K562 (cell line): ENCODE measurements at regions of chr6 and their contacts with region 1.

Region 1: DNA sequence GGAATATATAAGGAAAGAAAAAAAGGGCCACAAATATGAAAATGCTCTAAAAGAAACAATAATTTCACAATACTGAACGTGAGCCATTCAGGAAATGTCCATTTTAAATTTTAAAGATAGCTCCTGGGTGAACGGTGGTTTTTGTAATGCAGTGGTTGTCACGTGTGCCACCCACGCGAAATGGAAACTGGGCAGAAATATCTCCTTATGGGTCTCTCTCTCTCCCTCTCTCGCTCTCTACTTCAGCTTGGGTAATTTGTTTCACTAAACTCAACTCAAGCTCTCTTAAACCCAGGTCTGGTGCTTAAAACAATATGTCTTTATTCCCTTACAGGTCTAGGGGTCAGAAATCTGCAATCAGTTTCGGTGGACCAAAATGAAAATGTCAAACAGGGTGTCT is 150.8 kb downstream of the OR2B2 start:
- DNase-seq: peak in 2 of 4 experiments; percentile 3 to 5
- ATAC-seq: no peak
- H3K4me3 ChIP-seq: no peak overlapping the region
- H3K27ac ChIP-seq: no peak overlapping the region
- H3K4me1 ChIP-seq: peaks cover 14 to 20% of the 10 kb centered on the region in 2 experiments; a peak in 4 of 5 replicates
- H3K27me3 ChIP-seq: no peaks in the 10 kb centered on the region
- CTCF ChIP-seq: no peak
- EP300 ChIP-seq: no peak
- POLR2A ChIP-seq: no peak
- RAD21 ChIP-seq: no peak

Region 2: GRCh38 chr6:27687154-27688013 is 74.0 kb before region 1 on chr6:
- CTCF ChIA-PET with region 1: no interaction called
- POLR2A ChIA-PET with region 1: no interaction called
- in situ Hi-C with region 1: no loop called
- intact Hi-C with region 1: no loop called
- DNase-seq: peak; percentile 78 to 97 (median 82)
- ATAC-seq: peak; percentile 89
- H3K4me3 ChIP-seq: peak overlapping the region; percentile 63
- H3K27ac ChIP-seq: peak overlapping the region; percentile 78
- H3K4me1 ChIP-seq: peaks cover 5 to 24% of the 10 kb centered on the region in 2 experiments; a peak in 4 of 5 replicates
- H3K27me3 ChIP-seq: no peaks in the 10 kb centered on the region
- CTCF ChIP-seq: peak; percentile 92 to 96 (median 95)
- EP300 ChIP-seq: 0 out of 2 replicates have a peak, but pooled peaks have one; percentile 14
- POLR2A ChIP-seq: no peak
- RAD21 ChIP-seq: peak; percentile 71 to 87

Region 3: DNA sequence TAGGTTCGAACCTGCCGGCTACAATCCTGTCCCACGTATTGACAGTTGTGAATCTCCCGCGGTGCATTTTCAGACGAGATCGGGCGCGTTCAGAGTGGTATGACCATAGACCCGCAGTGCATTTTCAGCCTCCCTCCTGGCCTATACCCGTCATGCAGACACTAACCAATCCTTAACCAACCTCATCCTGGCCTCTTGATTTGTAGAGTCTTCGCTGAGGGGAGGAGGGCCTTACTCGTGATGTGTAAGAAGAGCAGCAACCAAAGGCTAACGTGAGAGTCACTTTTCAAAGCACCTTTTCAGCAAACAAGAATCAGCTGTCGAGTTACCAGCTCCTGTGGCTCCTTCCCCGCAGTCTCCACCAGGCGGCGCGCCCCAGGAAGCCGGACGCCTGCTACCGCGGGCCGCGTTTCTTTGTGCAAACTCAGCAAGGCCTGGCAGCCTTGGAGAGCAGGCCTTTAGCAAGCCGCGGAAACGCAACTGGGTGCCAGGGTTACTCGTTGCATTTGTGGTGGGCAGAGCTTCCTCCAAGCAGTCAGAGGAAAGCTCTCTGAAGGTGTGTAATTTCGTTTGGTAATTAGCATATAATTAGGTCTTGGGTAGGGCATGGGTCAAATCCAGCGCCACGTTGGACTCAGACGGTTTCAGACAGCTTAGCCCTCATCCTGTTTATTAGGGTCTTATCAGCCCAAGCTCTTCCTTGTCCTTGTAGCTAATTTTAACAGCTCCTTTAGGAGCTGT is 11.0 kb after region 1 on chr6:
- CTCF ChIA-PET with region 1: no interaction called
- POLR2A ChIA-PET with region 1: interaction called, 17 read pairs
- in situ Hi-C with region 1: no loop called
- intact Hi-C with region 1: no loop called
- DNase-seq: peak; percentile 83 to 95 (median 84)
- ATAC-seq: peak; percentile 92
- H3K4me3 ChIP-seq: no peak overlapping the region
- H3K27ac ChIP-seq: peak overlapping the region; percentile 75
- H3K4me1 ChIP-seq: peaks cover 22 to 40% of the 10 kb centered on the region in 2 experiments
- H3K27me3 ChIP-seq: no peaks in the 10 kb centered on the region
- CTCF ChIP-seq: peak; percentile 97 to 99 (median 97)
- EP300 ChIP-seq: peak; percentile 35
- POLR2A ChIP-seq: no peak
- RAD21 ChIP-seq: peak; percentile 94 to 97

Region 4: GRCh38 chr6:27795697-27796494 is 34.5 kb after region 1 on chr6:
- CTCF ChIA-PET with region 1: no interaction called
- POLR2A ChIA-PET with region 1: no interaction called
- in situ Hi-C with region 1: no loop called
- intact Hi-C with region 1: no loop called
- DNase-seq: peak; percentile 66 to 93 (median 74)
- ATAC-seq: peak; percentile 53
- H3K4me3 ChIP-seq: no peak overlapping the region
- H3K27ac ChIP-seq: peak overlapping the region; percentile 2; the same call in 1 of the 3 replicates
- H3K4me1 ChIP-seq: peaks cover 13 to 55% of the 10 kb centered on the region in 2 experiments
- H3K27me3 ChIP-seq: no peaks in the 10 kb centered on the region
- CTCF ChIP-seq: peak; percentile 70 to 95 (median 88); a peak in 5 of 6 replicates
- EP300 ChIP-seq: peak; percentile 81
- POLR2A ChIP-seq: no peak
- RAD21 ChIP-seq: peak; percentile 82 to 89